OCI-LY7 (cell line): ENCODE measurements at regions of chr3 and their contacts with region 1.

Region 1: GRCh38 chr3:42045719-42046243 is 45.4 kb upstream of the TRAK1 start:
- DNase-seq: no peak
- H3K4me3 ChIP-seq: no peak overlapping the region
- H3K27ac ChIP-seq: no peak overlapping the region
- H3K4me1 ChIP-seq: peaks cover 88% of the 10 kb centered on the region
- CTCF ChIP-seq: no peak

Region 2: DNA sequence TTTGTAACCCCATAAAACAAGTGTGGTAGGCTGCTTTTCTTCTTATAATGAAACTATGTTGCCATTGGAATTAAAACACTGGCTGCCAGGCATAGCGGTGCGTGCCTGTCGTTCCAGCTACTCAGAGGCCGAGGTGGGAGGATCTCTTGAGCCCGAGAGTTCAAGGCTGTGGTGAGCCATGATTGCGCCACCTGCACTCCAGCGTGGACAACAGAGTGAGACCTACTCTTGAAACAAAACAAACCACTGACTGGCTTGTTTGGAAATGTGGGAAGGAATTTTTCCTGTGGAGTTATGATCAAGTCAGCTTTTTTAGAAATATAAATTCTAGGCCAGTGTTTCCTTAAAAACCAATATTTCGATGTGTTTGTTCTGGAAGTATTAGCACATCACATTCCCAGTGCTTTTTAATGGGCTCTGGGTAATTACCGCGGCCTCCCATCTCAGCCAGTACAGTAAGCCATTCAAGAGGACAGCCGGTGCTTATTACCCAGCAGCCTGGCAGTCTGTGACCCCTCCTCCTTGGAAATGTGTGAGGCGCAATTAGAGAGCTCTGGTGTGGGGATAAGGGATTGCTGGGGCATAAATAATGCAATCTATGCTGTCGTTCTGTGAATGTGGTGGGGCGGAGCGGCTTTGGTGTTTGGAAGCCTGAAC is 13.0 kb before region 1 on chr3:
- CTCF ChIA-PET with region 1: no interaction called
- POLR2A ChIA-PET with region 1: interaction called, 13 read pairs
- intact Hi-C with region 1: no loop called
- DNase-seq: no peak
- H3K4me3 ChIP-seq: no peak overlapping the region
- H3K27ac ChIP-seq: no peak overlapping the region
- H3K4me1 ChIP-seq: peaks cover 33% of the 10 kb centered on the region
- CTCF ChIP-seq: no peak